HEK293 (cell line): ENCODE measurements at regions of chr11 and their contacts with region 1.

Region 1: DNA sequence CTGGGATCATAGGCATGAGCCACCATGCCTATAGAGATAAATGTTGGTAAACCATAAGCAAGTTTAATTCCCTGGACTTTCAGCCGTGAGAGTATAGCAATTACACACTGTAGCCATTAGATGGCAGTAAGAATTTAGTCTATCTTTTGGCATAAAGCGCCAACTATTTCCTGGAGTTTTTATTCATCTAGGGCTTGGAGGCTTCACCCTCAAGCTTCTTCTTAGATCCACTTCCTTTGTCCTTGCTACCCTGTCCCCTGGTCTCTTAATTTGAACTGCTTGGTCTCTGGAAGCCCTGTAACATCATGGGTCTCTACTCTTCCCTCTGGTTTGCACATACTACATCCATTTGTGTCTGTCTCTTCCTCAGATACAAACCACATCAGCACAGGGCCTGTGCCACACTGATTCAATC is 38.2 kb downstream of the OR10A6 start:
- H3K4me3 ChIP-seq: no peak overlapping the region
- H3K27ac ChIP-seq: no peak overlapping the region
- H3K4me1 ChIP-seq: no peaks in the 10 kb centered on the region
- CTCF ChIP-seq: no peak

Region 2: DNA sequence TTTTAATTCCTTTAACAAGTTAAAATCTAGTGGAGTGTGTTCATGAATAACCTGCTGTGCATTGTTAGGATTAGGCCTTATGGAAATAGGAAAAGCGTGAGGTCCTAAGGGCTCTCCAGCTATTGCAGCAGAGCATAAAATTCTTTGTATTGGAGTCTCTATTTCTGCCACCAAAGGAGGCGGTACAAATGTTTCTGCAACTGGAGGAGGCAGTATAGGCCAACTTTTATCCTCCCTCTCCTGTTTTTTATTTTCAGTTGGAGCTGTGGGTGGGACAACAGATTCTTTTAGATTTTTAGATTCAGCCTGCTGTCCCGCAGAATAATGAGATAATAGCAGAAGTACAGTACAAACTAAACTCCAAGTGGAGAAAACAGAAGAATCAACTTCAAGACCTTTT is 12.1 kb after region 1 on chr11:
- CTCF ChIA-PET with region 1: interaction called, 12 read pairs
- POLR2A ChIA-PET with region 1: no interaction called
- H3K4me3 ChIP-seq: no peak overlapping the region
- H3K27ac ChIP-seq: no peak overlapping the region
- H3K4me1 ChIP-seq: no peaks in the 10 kb centered on the region
- CTCF ChIP-seq: no peak

Region 3: GRCh38 chr11:7918127-7918526 is 25.3 kb after region 1 on chr11:
- CTCF ChIA-PET with region 1: no interaction called
- POLR2A ChIA-PET with region 1: no interaction called
- H3K4me3 ChIP-seq: no peak overlapping the region
- H3K27ac ChIP-seq: no peak overlapping the region
- H3K4me1 ChIP-seq: no peaks in the 10 kb centered on the region
- CTCF ChIP-seq: no peak

Region 4: GRCh38 chr11:7977232-7977917 is 84.5 kb after region 1 on chr11:
- CTCF ChIA-PET with region 1: interaction called, 85 read pairs
- POLR2A ChIA-PET with region 1: interaction called, 3 read pairs
- H3K4me3 ChIP-seq: no peak overlapping the region
- H3K27ac ChIP-seq: no peak overlapping the region
- H3K4me1 ChIP-seq: no peaks in the 10 kb centered on the region
- CTCF ChIP-seq: no peak